Caco-2 (cell line): ENCODE measurements at regions of chr2 and their contacts with region 1.

Region 1: GRCh38 chr2:41963661-41964525 is 83.9 kb upstream of the PKDCC start:
- DNase-seq: peak; percentile 73 to 91
- H3K4me3 ChIP-seq: no peak overlapping the region
- H3K4me3 Mint-ChIP-seq: no peak overlapping the region
- H3K27ac Mint-ChIP-seq: peak overlapping the region; percentile 36
- H3K4me1 ChIP-seq: peaks cover 44% of the 10 kb centered on the region
- H3K4me1 Mint-ChIP-seq: peaks cover 47% of the 10 kb centered on the region
- H3K27me3 ChIP-seq: no peaks in the 10 kb centered on the region
- H3K27me3 Mint-ChIP-seq: no peaks in the 10 kb centered on the region
- CTCF ChIP-seq: peak in 1 of 2 experiments; percentile 4

Region 2: DNA sequence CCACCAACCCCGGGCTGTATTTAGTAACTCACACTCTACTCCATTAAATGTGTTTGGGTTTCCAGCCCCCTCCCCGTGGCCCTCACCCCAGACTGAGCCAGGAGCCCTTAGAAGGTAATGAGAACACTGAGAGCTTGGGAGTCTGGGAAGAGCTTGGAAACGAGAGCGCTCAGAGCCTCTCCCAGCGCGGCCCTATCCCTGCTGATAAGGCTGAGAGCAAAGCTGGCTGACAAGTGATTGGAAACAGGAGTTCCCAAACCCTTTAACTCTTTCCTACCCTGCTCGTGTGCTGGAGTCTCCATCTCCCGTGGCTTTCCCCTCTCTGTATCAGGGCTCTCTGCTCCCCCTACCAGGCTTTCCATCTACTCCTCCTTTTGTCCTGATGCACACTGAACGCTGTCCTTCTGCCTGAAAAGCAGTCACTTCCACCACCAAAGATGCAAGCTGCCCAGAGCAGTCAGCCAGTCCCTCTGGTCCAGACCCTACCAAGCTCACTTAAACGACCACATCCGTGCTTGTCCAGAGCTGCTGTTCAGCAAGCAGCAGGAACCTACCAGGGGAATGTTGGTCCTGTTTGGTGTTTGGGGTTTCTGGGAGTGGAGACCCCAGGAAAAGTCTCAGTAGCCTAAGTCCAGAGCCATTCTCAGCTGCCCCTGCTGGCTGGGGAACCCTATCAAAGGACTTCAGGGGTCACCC is 16.0 kb before region 1 on chr2:
- CTCF ChIA-PET with region 1: no interaction called
- POLR2A ChIA-PET with region 1: interaction called, 4 read pairs
- intact Hi-C with region 1: loop called (anchors 2 kb)
- DNase-seq: peak; percentile 32 to 54
- H3K4me3 ChIP-seq: no peak overlapping the region
- H3K4me3 Mint-ChIP-seq: peak overlapping the region; percentile 12
- H3K27ac Mint-ChIP-seq: peak overlapping the region; percentile 21
- H3K4me1 ChIP-seq: peaks cover 37% of the 10 kb centered on the region
- H3K4me1 Mint-ChIP-seq: peaks cover 36% of the 10 kb centered on the region
- H3K27me3 ChIP-seq: no peaks in the 10 kb centered on the region
- H3K27me3 Mint-ChIP-seq: no peaks in the 10 kb centered on the region
- CTCF ChIP-seq: no peak

Region 3: GRCh38 chr2:41985573-41986095 is 21.7 kb after region 1 on chr2:
- CTCF ChIA-PET with region 1: no interaction called
- POLR2A ChIA-PET with region 1: no interaction called
- intact Hi-C with region 1: loop called (anchors 2 kb)
- DNase-seq: no peak
- H3K4me3 ChIP-seq: no peak overlapping the region
- H3K4me3 Mint-ChIP-seq: no peak overlapping the region
- H3K27ac Mint-ChIP-seq: no peak overlapping the region
- H3K4me1 ChIP-seq: peaks cover 13% of the 10 kb centered on the region
- H3K4me1 Mint-ChIP-seq: peaks cover 21% of the 10 kb centered on the region
- H3K27me3 ChIP-seq: no peaks in the 10 kb centered on the region
- H3K27me3 Mint-ChIP-seq: no peaks in the 10 kb centered on the region
- CTCF ChIP-seq: no peak